OCI-LY7 (cell line): ENCODE measurements at regions of chr13 and their contacts with region 1.

Region 1: GRCh38 chr13:95301183-95301967 is at the start of gene ABCC4:
- DNase-seq: peak; percentile 72
- H3K4me3 ChIP-seq: peak within 1 kb of the TSS; percentile 89
- H3K27ac ChIP-seq: peak within 1 kb of the TSS; percentile 22
- H3K4me1 ChIP-seq: peaks cover 27% of the 10 kb centered on the region
- CTCF ChIP-seq: no peak
- total RNA-seq, gene ABCC4: 7.3 and 8.4 TPM in 2 replicates

Region 2: GRCh38 chr13:95191821-95192563 is 109.4 kb before region 1 on chr13:
- CTCF ChIA-PET with region 1: no interaction called
- POLR2A ChIA-PET with region 1: no interaction called
- intact Hi-C with region 1: loop called (anchors 2 kb)
- DNase-seq: peak; percentile 74
- H3K4me3 ChIP-seq: no peak overlapping the region
- H3K27ac ChIP-seq: no peak overlapping the region
- H3K4me1 ChIP-seq: peaks cover 6% of the 10 kb centered on the region
- CTCF ChIP-seq: peak; percentile 82

Region 3: DNA sequence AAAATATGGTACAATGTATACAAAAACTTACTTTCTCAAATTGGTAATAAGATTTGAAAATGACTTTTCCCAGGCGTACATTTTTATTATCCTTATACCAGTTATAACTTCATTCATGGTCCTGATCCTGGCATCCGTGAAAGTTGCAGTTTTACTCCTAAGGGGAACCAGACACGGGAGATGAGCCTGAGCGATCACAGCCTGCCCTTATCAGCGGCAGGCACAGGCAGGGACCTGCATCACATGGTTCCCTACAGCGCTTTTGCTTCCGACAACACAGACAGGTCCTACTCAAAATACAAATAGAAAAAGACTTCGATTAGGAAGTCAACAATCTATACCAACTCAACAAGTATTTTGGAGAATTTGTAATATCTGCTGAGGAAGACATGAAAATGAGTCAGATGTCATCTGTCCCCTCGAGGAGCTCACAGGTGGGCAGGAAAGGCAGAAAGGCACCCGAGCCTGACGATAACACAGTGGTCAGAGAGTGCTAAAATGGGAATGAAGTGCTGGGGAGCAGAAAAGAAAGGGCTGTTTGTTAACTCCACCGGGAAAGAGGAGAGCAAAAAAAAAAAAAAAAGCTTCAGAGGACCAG is 93.5 kb before region 1 on chr13:
- CTCF ChIA-PET with region 1: no interaction called
- POLR2A ChIA-PET with region 1: no interaction called
- intact Hi-C with region 1: loop called (anchors 5 kb)
- DNase-seq: peak; percentile 58
- H3K4me3 ChIP-seq: peak overlapping the region; percentile 53
- H3K27ac ChIP-seq: peak overlapping the region; percentile 71
- H3K4me1 ChIP-seq: peaks cover 31% of the 10 kb centered on the region
- CTCF ChIP-seq: no peak

Region 4: DNA sequence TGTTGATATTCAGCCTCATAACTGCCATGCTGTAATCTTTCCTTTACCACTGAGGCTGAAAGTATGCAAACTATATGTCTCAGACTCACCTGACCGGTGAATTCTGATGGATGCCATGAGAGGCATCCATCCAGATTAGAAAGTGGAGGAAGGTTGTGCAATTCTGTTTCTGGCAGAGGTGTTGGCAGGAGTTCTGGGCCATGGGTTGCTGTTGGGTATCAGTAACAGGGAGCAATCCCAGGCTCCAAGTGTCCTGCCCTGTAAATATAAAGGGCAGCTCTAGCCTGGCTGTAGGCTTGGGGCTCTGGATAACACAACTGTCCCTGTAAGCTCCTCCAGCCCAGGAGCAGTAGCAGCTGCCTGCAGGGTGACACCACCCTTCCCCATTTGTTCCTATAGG is 77.2 kb after region 1 on chr13:
- CTCF ChIA-PET with region 1: interaction called, 4 read pairs
- POLR2A ChIA-PET with region 1: interaction called, 8 read pairs
- intact Hi-C with region 1: loop called (anchors 5 kb)
- DNase-seq: no peak
- H3K4me3 ChIP-seq: no peak overlapping the region
- H3K27ac ChIP-seq: no peak overlapping the region
- H3K4me1 ChIP-seq: peaks cover 5% of the 10 kb centered on the region
- CTCF ChIP-seq: no peak

Region 5: GRCh38 chr13:95403828-95404522 is 102.6 kb after region 1 on chr13:
- CTCF ChIA-PET with region 1: no interaction called
- POLR2A ChIA-PET with region 1: no interaction called
- intact Hi-C with region 1: loop called (anchors 5 kb)
- DNase-seq: peak; percentile 63
- H3K4me3 ChIP-seq: no peak overlapping the region
- H3K27ac ChIP-seq: no peak overlapping the region
- H3K4me1 ChIP-seq: peaks cover 8% of the 10 kb centered on the region
- CTCF ChIP-seq: peak; percentile 82